T-cell (primary cell): ENCODE measurements at regions of chr2 and their contacts with region 1.

Region 1: DNA sequence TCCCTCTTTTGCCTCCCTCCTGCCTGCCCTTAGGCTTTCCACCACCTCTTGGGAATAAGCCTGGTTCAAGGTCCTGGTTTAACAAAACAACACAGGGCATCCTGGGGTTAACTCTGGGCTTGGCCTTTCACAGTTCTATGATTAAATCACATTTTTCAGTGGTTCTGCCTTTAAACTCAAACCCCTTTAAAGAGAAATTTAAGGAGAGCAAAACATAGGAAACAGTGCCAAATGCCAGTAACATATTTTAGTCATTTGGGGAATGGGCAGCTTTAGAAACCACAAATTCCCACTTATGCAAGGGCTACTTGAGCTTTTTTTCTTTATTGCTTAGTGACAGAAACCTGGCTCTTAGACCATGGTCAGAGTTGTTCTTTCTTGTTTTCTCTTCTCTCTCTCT is 112.2 kb upstream of the FZD5 start:
- DNase-seq: no peak
- ATAC-seq: no peak
- H3K4me3 ChIP-seq: no peak overlapping the region
- H3K4me3 Mint-ChIP-seq: no peak overlapping the region
- H3K27ac ChIP-seq: no peak overlapping the region
- H3K27ac Mint-ChIP-seq: no peak overlapping the region
- H3K4me1 ChIP-seq: no peaks in the 10 kb centered on the region
- H3K4me1 Mint-ChIP-seq: no peaks in the 10 kb centered on the region
- H3K27me3 ChIP-seq: no peaks in the 10 kb centered on the region
- H3K27me3 Mint-ChIP-seq: no peaks in the 10 kb centered on the region

Region 2: DNA sequence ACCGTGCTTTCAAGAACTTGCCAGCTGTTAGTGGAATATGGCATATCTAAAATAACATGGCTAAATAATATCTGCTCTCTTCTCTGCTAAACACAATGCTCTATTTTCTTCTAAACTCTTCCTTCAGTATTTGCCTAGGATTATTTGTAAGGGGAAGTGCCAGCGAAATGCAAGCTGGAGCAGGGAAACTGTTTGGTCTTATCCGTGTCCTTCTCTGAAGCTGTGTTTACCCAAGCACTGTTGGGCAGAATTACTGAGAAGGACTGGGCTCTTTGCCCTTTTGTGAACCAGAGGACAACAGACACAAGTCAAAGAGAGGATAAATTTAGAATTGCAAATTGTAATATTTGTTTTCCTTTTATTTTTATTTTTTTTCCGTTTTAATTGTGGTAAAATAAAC is 918.9 kb before region 1 on chr2:
- CTCF ChIA-PET with region 1: no interaction called
- POLR2A ChIA-PET with region 1: interaction called in 1 of 2 experiments, 12 read pairs
- DNase-seq: no peak
- ATAC-seq: no peak
- H3K4me3 ChIP-seq: no peak overlapping the region
- H3K4me3 Mint-ChIP-seq: no peak overlapping the region
- H3K27ac ChIP-seq: no peak overlapping the region
- H3K27ac Mint-ChIP-seq: no peak overlapping the region
- H3K4me1 ChIP-seq: no peaks in the 10 kb centered on the region
- H3K4me1 Mint-ChIP-seq: no peaks in the 10 kb centered on the region
- H3K27me3 ChIP-seq: no peaks in the 10 kb centered on the region
- H3K27me3 Mint-ChIP-seq: no peaks in the 10 kb centered on the region